ENCODE measurements at regions of chr4 and their contacts with region 1.

Region 1: DNA sequence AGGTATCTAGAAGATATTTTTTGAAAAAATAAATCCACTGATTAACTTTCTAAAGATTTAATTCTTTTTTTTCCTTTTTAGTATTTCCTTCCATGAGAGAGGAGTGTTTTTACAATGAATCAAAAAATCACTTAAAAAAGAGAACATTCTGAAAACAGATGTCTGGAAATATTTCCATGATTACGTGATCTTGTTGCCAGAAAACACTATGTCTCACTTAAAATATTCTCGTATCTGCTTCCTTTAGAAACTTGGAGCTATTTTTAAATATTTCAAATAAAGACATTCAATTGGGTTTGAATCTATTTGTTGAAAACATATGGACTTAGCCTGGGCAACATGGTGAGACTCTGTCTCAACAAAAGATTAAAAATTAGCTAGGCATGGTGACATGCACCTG is 232.8 kb upstream of the RASGEF1B start:
- DNase-seq: no peak
- H3K4me3 ChIP-seq: no peak overlapping the region
- H3K27ac ChIP-seq: no peak overlapping the region
- H3K4me1 ChIP-seq: peaks cover 8% of the 10 kb centered on the region
- H3K27me3 ChIP-seq: no peaks in the 10 kb centered on the region
- CTCF ChIP-seq: no peak

Region 2: DNA sequence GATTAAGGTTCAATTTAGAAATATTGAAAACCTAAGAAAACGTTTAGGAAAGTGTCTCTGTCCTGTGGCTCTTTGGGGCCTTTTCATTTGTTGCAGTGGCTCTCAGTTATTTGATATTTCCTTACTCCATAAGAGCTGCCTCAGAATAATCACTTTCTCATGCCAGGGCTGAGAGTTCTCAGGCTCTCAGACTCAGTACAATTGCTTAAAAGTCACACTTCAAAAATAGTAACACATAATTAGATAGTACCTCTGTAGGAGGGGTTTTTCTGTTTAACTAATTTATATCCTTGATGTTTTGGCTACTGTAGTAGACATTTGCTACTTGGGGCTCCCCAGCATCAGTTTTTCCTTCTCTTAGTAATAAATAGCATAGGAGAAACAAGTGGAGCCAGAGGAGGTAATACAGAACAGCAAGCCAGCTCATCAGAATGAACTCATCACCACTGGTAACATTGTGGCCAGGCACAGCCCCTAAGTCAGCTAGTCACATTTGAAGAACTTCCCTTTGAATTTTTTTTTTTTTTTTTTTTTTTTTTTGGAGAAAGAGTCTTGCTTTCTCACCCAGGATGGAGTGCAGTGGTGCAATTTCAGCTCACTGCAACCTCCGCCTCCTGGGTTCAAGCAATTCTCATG is 677.3 kb after region 1 on chr4:
- CTCF ChIA-PET with region 1: no interaction called
- POLR2A ChIA-PET with region 1: interaction called, 24 read pairs
- intact Hi-C with region 1: no loop called
- DNase-seq: no peak
- H3K4me3 ChIP-seq: no peak overlapping the region
- H3K27ac ChIP-seq: no peak overlapping the region
- H3K4me1 ChIP-seq: no peaks in the 10 kb centered on the region
- H3K27me3 ChIP-seq: no peaks in the 10 kb centered on the region
- CTCF ChIP-seq: no peak